ENCODE measurements at regions of chr3 and their contacts with region 1.

Region 1: GRCh38 chr3:113514265-113514769 is 639 bp downstream of the SPICE1 start:
- DNase-seq: no peak
- ATAC-seq: peak in 2 of 4 donors; percentile 1 to 18
- H3K4me3 ChIP-seq: peak overlapping the region; percentile 53 to 98 (median 82)
- H3K27ac ChIP-seq: peak overlapping the region in 11 of 12 donors; percentile 18 to 91 (median 80)
- H3K4me1 ChIP-seq: peaks cover 0 to 19% (median 8%) of the 10 kb centered on the region in 12 donors
- H3K27me3 ChIP-seq: peaks cover 0 to 10% (median 0%) of the 10 kb centered on the region in 9 donors
- CTCF ChIP-seq: no peak
- POLR2A ChIP-seq: no peak

Region 2: DNA sequence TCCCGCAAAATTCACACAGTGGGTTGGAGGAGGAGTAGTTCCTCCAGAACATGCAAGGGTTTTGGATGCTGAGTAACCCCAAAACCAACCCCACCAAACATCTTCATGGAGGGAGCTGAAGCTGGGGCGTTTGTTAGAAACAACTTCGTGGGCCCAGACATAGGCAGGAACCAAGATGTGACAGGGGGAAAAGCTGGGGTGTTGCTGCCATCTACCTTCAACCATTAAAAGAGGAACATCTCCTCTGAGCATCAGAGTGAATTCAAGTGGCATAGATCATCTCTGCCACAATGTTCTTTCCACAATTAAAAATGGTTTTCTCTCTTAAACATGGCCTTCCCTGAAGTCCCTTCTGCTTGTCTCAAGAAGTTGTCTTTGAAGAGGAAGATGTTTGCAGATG is 38.5 kb after region 1 on chr3:
- intact Hi-C with region 1: no loop called
- DNase-seq: no peak
- ATAC-seq: no peak
- H3K4me3 ChIP-seq: no peak overlapping the region
- H3K27ac ChIP-seq: no peak overlapping the region
- H3K4me1 ChIP-seq: no peaks in the 10 kb centered on the region
- H3K27me3 ChIP-seq: no peaks in the 10 kb centered on the region
- CTCF ChIP-seq: no peak
- POLR2A ChIP-seq: no peak

Region 3: DNA sequence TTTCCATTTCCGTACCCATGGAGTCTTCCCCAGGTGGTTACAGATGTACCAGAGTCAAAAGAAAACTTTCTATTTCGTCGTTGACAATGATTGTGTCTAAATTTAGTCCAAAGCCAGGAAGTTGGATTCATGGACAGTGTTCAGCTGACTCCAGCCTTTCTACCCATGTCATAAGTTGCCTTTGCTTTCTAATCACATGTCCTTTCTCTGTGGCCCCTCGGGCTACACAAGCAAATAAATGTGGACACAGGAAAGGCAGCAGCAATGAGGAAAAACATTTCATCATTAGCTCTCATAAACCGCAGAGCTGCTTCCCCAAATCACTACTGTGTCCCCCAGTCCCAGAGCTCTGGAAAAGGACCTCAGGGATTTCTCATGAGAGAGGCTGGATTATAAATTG is 100.1 kb after region 1 on chr3:
- intact Hi-C with region 1: loop called in 1 of 10 experiments (anchors 10 kb)
- DNase-seq: peak in 1 of 5 donors; percentile 18
- ATAC-seq: peak in 3 of 4 donors; percentile 73 to 82 (median 79)
- H3K4me3 ChIP-seq: peak overlapping the region in 1 of 12 donors; percentile 2
- H3K27ac ChIP-seq: peak overlapping the region in 9 of 12 donors; percentile 3 to 77 (median 57)
- H3K4me1 ChIP-seq: peaks cover 0 to 24% (median 14%) of the 10 kb centered on the region in 12 donors
- H3K27me3 ChIP-seq: no peaks in the 10 kb centered on the region
- CTCF ChIP-seq: no peak
- POLR2A ChIP-seq: no peak

Region 4: DNA sequence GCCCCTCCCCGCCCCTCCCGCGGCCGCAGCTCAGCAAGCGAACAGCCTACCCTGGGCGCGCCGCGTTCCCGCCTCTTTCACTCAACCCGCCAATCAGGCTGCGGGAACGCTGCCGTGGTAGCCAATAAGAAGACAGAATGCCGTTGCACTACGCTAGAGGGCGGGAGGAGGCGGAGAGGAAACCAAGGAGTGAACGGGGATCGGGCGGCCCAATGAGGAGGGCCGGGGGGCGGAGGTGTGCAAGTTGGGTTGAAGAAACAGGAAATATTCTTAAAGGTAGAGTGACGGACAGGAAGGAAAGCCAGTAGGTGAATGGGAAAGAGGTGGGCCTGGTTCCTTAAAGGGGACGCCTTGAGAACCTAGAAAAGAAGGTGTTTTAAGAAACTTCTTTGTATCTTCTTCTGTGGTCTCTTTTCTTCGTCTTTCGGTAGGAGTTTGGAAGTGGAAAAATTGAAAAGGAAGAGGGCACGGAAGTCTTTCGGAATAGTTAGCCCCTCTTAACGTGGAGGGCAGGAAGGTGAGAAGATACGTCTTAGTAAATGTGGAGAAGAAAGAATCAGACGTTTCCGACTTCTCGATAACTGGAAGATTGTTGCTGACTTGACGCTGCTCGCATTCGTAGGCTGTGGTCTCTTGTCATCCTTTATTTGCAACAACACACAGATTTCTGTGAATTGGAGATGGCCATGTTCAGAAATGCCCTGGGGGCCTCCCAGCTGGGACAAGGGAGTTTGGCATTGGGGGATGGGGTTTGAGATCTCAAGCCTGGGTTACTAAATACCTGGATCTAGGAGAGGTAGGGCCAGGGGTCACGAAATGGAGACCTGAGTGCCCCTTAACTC is 182.6 kb after region 1 on chr3:
- intact Hi-C with region 1: loop called in 2 of 10 experiments (anchors 5 to 10 kb)
- DNase-seq: peak; percentile 99 to 100 (median 99)
- ATAC-seq: peak; percentile 96 to 99 (median 97)
- H3K4me3 ChIP-seq: peak overlapping the region; percentile 56 to 100 (median 87)
- H3K27ac ChIP-seq: peak overlapping the region; percentile 96 to 100 (median 100)
- H3K4me1 ChIP-seq: peaks cover 2 to 45% (median 26%) of the 10 kb centered on the region in 12 donors
- H3K27me3 ChIP-seq: no peaks in the 10 kb centered on the region
- CTCF ChIP-seq: peak in 7 of 12 donors; percentile 23 to 54 (median 29)
- POLR2A ChIP-seq: no peak